Lower leg skin (tissue), 4 donors: ENCODE measurements at regions of chr19 and their contacts with region 1.

Region 1: GRCh38 chr19:55027472-55028337 is 10.4 kb downstream of the GP6 start:
- DNase-seq: no peak
- H3K4me3 ChIP-seq: no peak overlapping the region
- CTCF ChIP-seq: no peak
- POLR2A ChIP-seq: no peak

Region 2: GRCh38 chr19:54952591-54953344 is 74.9 kb before region 1 on chr19:
- intact Hi-C with region 1: no loop called
- DNase-seq: no peak
- H3K4me3 ChIP-seq: no peak overlapping the region
- CTCF ChIP-seq: no peak
- POLR2A ChIP-seq: no peak

Region 3: DNA sequence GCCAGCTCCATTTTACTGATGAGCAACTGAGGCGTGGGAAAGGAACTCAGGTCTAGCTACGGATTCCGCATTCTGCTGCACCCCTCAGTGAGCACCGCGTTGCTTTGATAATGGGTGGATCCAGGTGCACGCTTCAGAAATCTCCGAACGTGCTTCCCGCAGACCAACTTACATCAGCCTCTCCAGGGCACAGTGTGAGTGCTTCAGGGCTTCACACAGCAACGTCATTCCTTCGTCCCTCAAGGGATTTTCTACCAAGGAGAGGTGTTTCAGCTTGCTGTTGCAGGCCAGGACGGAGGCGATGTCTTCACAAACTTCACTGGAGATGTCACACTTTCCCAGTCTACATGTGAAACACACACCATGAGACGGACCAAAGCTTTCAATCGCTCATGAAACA is 688.9 kb after region 1 on chr19:
- intact Hi-C with region 1: loop called (anchors 5 kb)
- DNase-seq: peak in 1 of 2 donors; percentile 45
- H3K4me3 ChIP-seq: no peak overlapping the region
- CTCF ChIP-seq: no peak
- POLR2A ChIP-seq: no peak